HepG2 (cell line): ENCODE measurements at regions of chr2 and their contacts with region 1.

Region 1: GRCh38 chr2:47127862-47128543 is 27.1 kb downstream of the STPG4 start:
- DNase-seq: no peak
- ATAC-seq: peak; percentile 23
- H3K4me3 ChIP-seq: no peak overlapping the region
- H3K27ac ChIP-seq: no peak overlapping the region
- H3K4me1 ChIP-seq: peaks cover 44% of the 10 kb centered on the region
- H3K27me3 ChIP-seq: no peaks in the 10 kb centered on the region
- CTCF ChIP-seq: peak; percentile 54
- EP300 ChIP-seq: no peak
- POLR2A ChIP-seq: no peak
- RAD21 ChIP-seq: no peak

Region 2: GRCh38 chr2:46982351-46983064 is 145.5 kb before region 1 on chr2:
- CTCF ChIA-PET with region 1: no interaction called
- POLR2A ChIA-PET with region 1: no interaction called
- in situ Hi-C with region 1: no loop called
- intact Hi-C with region 1: no loop called
- DNase-seq: no peak
- ATAC-seq: no peak
- H3K4me3 ChIP-seq: no peak overlapping the region
- H3K27ac ChIP-seq: peak overlapping the region; percentile 29
- H3K4me1 ChIP-seq: peaks cover 30% of the 10 kb centered on the region
- H3K27me3 ChIP-seq: no peaks in the 10 kb centered on the region
- CTCF ChIP-seq: no peak
- EP300 ChIP-seq: no peak
- POLR2A ChIP-seq: no peak
- RAD21 ChIP-seq: no peak

Region 3: GRCh38 chr2:47165001-47165555 is 37.1 kb after region 1 on chr2:
- CTCF ChIA-PET with region 1: no interaction called
- POLR2A ChIA-PET with region 1: no interaction called
- in situ Hi-C with region 1: no loop called
- intact Hi-C with region 1: loop called (anchors 5 kb)
- DNase-seq: no peak
- ATAC-seq: no peak
- H3K4me3 ChIP-seq: no peak overlapping the region
- H3K27ac ChIP-seq: no peak overlapping the region
- H3K4me1 ChIP-seq: peaks cover 95% of the 10 kb centered on the region
- H3K27me3 ChIP-seq: no peaks in the 10 kb centered on the region
- CTCF ChIP-seq: no peak
- EP300 ChIP-seq: no peak
- POLR2A ChIP-seq: no peak
- RAD21 ChIP-seq: no peak